Dendritic cell treated with granulocyte-macrophage colony-stimulating factor and Interleukin-4, amounts not matched to agents 40 ng/mL and 50 ng/mL, for 4 days (primary cell): ENCODE measurements at regions of chr6 and their contacts with region 1.

Region 1: GRCh38 chr6:106223300-106223930 is 102.1 kb downstream of the ATG5 start:
- H3K4me3 Mint-ChIP-seq: no peak overlapping the region
- H3K27ac Mint-ChIP-seq: no peak overlapping the region
- H3K4me1 Mint-ChIP-seq: peaks cover 24% of the 10 kb centered on the region
- H3K27me3 Mint-ChIP-seq: no peaks in the 10 kb centered on the region

Region 2: DNA sequence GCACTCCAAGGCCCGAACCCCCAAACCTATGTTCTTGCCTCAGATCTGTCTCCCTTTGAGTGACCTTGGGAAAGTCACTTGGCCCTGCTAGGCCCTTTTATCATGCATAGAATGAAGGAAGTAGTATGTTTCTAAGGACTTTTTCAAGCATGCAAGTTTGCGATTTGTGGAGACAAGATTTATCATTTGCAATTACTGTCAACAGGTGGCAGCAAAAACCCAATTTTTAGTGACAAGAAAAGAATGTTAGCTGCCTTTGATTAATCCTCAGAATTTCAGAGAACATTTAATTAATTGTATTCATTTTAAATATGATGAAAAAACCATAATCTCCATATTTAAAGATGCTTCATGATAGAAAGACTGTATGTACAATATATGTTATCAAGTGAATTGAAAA is 792.2 kb before region 1 on chr6:
- intact Hi-C with region 1: loop called (anchors 5 kb)
- H3K4me3 Mint-ChIP-seq: no peak overlapping the region
- H3K27ac Mint-ChIP-seq: no peak overlapping the region
- H3K4me1 Mint-ChIP-seq: no peaks in the 10 kb centered on the region
- H3K27me3 Mint-ChIP-seq: no peaks in the 10 kb centered on the region

Region 3: DNA sequence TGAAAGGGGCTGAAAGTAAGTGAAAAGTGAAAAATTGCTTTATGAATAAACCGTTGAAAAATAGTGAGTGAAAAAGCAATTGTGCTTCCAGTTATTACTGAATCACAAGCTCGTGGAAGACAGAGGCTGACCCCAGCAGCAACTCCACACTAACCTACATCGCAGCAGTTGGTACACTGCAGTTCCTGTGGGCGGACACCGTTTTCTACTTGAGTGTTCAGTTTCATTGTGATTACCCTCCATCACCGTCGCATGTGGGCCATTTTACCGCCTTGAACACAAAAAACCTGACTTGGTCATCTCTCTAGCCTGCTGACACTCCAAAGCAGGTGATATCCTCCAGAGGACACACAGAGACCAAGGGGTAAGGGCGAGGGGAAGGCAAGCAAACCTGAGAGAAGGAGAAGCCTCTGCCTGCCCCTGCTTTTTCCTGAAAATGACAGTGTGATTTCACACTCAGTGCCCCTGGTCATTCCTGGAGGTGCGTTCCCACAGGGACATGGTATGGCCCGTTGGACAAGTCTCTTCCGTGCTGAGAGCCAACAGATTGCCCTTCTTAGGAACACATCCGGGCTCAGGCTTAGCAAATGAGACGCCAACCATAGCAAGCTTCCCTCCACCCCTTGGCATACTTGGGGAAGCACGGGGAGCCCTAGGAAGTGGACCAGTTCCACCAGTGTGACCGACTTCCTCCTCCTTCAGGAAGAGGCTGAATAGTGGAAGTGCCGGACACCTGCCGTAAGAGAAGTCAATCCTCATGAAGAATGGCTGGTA is 108.7 kb before region 1 on chr6:
- intact Hi-C with region 1: loop called (anchors 5 kb)
- H3K4me3 Mint-ChIP-seq: no peak overlapping the region
- H3K27ac Mint-ChIP-seq: no peak overlapping the region
- H3K4me1 Mint-ChIP-seq: peaks cover 45% of the 10 kb centered on the region
- H3K27me3 Mint-ChIP-seq: peaks cover 2% of the 10 kb centered on the region

Region 4: GRCh38 chr6:106300944-106301343 is 77.5 kb after region 1 on chr6:
- intact Hi-C with region 1: no loop called
- H3K4me3 Mint-ChIP-seq: no peak overlapping the region
- H3K27ac Mint-ChIP-seq: no peak overlapping the region
- H3K4me1 Mint-ChIP-seq: no peaks in the 10 kb centered on the region
- H3K27me3 Mint-ChIP-seq: no peaks in the 10 kb centered on the region